Calu3 (cell line): ENCODE measurements at regions of chr22 and their contacts with region 1.

Region 1: GRCh38 chr22:31561238-31561887 is 65.0 kb downstream of the SFI1 start:
- DNase-seq: peak; percentile 86
- H3K4me3 Mint-ChIP-seq: no peak overlapping the region
- H3K27ac Mint-ChIP-seq: no peak overlapping the region
- H3K4me1 Mint-ChIP-seq: no peaks in the 10 kb centered on the region
- H3K27me3 Mint-ChIP-seq: no peaks in the 10 kb centered on the region
- CTCF ChIP-seq: peak; percentile 81

Region 2: GRCh38 chr22:31399211-31400028 is 161.9 kb before region 1 on chr22 and contains the start of gene DRG1:
- CTCF ChIA-PET with region 1: no interaction called
- intact Hi-C with region 1: no loop called
- DNase-seq: peak; percentile 97
- H3K4me3 Mint-ChIP-seq: peak within 1 kb of the TSS; percentile 93
- H3K27ac Mint-ChIP-seq: peak within 1 kb of the TSS; percentile 88
- H3K4me1 Mint-ChIP-seq: no peaks in the 10 kb centered on the region
- H3K27me3 Mint-ChIP-seq: peaks cover 6% of the 10 kb centered on the region
- CTCF ChIP-seq: no peak
- total RNA-seq, gene DRG1: 68.8 and 75.2 TPM in 2 replicates

Region 3: GRCh38 chr22:31445642-31446041 is 115.7 kb before region 1 on chr22:
- CTCF ChIA-PET with region 1: no interaction called
- intact Hi-C with region 1: no loop called
- DNase-seq: no peak
- H3K4me3 Mint-ChIP-seq: no peak overlapping the region
- H3K27ac Mint-ChIP-seq: no peak overlapping the region
- H3K4me1 Mint-ChIP-seq: no peaks in the 10 kb centered on the region
- H3K27me3 Mint-ChIP-seq: no peaks in the 10 kb centered on the region
- CTCF ChIP-seq: no peak

Region 4: DNA sequence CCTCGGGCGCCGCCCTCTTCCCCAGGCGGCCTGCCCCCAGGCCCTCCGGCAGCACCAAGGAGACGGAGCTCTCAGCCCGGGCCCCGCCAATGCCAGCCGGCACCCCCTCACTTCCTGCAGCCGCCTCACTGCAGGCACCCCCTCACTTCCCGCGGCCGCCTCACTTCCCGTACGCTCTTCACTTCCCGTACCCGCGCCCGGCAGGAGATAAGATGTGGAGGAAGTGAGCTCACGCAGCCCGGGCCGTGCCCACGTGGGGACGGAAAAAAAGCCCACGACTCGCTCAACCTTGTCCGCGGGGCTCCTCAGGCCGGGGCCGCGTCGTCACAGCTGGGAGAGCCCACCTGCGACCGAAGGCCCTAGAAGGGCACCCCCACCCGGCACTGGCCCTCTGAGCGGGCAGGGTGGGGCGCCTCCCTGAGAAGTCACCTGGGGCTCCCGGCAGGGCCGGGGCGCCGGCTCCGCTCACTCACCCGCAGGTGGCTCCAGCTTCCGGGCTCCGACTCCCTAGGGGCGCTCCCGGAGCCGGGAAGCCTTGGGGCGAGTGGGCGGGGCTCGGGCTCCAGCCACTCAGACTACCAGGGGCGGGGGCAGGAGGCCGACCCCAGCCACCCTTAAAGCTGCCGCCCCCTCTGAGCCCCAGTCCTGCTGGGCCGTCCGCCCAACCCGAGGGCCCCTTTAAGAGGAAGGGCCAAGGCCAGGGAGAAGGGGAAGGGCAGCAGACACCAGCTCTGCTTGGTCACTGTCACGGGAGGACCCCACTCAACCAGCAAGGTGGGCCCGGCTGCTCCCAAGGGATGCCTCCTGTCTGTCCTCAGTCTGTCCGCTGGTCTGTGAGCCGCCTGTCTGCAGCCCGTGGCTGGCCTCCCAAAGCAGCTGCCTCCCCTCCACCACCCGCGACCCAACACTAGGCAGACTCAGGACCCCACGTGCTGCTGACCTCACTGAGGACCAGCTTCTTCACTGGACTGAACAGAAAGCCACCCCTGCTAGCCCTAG is 69.3 kb after region 1 on chr22:
- CTCF ChIA-PET with region 1: interaction called, 5 read pairs
- intact Hi-C with region 1: loop called (anchors 2 kb)
- DNase-seq: peak; percentile 95
- H3K4me3 Mint-ChIP-seq: peak overlapping the region; percentile 98
- H3K27ac Mint-ChIP-seq: peak overlapping the region; percentile 82
- H3K4me1 Mint-ChIP-seq: peaks cover 43% of the 10 kb centered on the region
- H3K27me3 Mint-ChIP-seq: no peaks in the 10 kb centered on the region
- CTCF ChIP-seq: no peak